Breast epithelium (tissue), 4 donors: ENCODE measurements at regions of chr3 and their contacts with region 1.

Region 1: DNA sequence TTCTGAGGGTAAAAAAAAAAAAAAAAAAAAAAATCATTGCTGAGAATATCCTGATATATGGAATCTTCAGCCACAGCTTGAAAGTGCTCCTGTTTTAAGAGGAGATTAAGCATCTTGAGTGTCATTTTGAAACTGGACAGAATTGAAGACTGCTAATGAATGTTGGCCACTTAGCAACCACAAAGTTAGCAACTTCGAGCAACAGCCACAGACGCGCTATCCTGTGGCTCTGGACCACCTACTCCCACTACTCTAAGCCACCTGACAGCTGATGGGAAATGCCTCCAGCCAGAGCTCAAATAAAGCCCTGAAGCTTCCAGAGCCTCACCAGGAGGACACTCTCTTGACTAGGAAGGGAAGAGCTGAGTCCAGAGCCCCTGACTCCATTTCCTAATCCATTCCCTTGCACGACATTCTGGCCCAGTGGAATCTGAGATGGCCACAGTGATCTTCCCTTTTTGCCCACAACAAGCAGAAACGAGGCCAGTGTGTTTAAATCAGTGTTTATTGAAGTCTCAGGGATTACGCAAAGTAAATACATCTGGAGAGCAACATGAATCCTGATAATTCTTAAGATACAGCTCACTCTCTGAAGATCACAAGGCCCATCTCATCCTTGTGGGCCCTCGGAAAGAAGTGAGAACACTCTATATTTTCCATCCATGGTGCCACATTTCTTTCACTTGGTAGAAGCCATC is 58.6 kb downstream of the TMEM212 start:
- DNase-seq: no peak
- H3K4me3 ChIP-seq: no peak overlapping the region
- H3K27ac ChIP-seq: no peak overlapping the region
- H3K4me1 ChIP-seq: no peaks in the 10 kb centered on the region
- H3K27me3 ChIP-seq: no peaks in the 10 kb centered on the region
- CTCF ChIP-seq: no peak
- POLR2A ChIP-seq: no peak

Region 2: GRCh38 chr3:171772427-171773056 is 129.2 kb before region 1 on chr3:
- intact Hi-C with region 1: no loop called
- DNase-seq: no peak
- H3K4me3 ChIP-seq: no peak overlapping the region
- H3K27ac ChIP-seq: peak overlapping the region; percentile 27 to 81
- H3K4me1 ChIP-seq: no peaks in the 10 kb centered on the region
- H3K27me3 ChIP-seq: no peaks in the 10 kb centered on the region
- CTCF ChIP-seq: peak; percentile 27 to 71 (median 61)
- POLR2A ChIP-seq: no peak

Region 3: GRCh38 chr3:171890398-171890797 is 11.4 kb before region 1 on chr3:
- intact Hi-C with region 1: loop called (anchors 1 kb)
- DNase-seq: no peak
- H3K4me3 ChIP-seq: no peak overlapping the region
- H3K27ac ChIP-seq: no peak overlapping the region
- H3K4me1 ChIP-seq: no peaks in the 10 kb centered on the region
- H3K27me3 ChIP-seq: no peaks in the 10 kb centered on the region
- CTCF ChIP-seq: no peak
- POLR2A ChIP-seq: no peak

Region 4: DNA sequence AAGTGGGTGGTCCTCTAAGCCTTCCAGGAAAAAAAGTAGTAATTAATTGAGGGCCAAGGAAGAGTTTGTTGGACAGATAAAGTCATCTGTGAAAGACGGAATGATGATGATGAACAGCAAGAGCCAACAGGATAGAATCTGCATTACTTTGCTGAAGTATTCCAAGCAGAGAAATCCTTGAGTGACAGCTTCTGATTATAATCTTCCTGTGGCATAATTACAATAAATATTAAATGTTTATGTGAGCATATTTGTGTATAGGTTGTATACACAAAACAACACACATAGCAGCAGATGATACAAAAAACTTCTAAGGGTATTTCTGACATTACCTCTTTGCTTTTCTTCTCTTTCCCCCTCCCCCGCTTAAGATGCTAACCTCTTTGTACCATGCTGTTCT is 1091.6 kb after region 1 on chr3:
- intact Hi-C with region 1: no loop called
- DNase-seq: no peak
- H3K4me3 ChIP-seq: no peak overlapping the region
- H3K27ac ChIP-seq: no peak overlapping the region
- H3K4me1 ChIP-seq: no peaks in the 10 kb centered on the region
- H3K27me3 ChIP-seq: no peaks in the 10 kb centered on the region
- CTCF ChIP-seq: no peak
- POLR2A ChIP-seq: no peak